ENCODE measurements at regions of chr1 and their contacts with region 1.

Region 1: GRCh38 chr1:147172168-147172992 is at the start of gene PRKAB2:
- DNase-seq: peak; percentile 97
- H3K4me3 ChIP-seq: peak within 1 kb of the TSS; percentile 72 to 94 (median 79)
- H3K27ac ChIP-seq: peak within 1 kb of the TSS; percentile 74
- H3K4me1 ChIP-seq: peaks cover 12% of the 10 kb centered on the region
- H3K27me3 ChIP-seq: no peaks in the 10 kb centered on the region
- CTCF ChIP-seq: peak; percentile 88 to 97
- POLR2A ChIP-seq: peak; percentile 75
- total RNA-seq, gene PRKAB2: 6.2 and 8.1 TPM in 2 replicates

Region 2: DNA sequence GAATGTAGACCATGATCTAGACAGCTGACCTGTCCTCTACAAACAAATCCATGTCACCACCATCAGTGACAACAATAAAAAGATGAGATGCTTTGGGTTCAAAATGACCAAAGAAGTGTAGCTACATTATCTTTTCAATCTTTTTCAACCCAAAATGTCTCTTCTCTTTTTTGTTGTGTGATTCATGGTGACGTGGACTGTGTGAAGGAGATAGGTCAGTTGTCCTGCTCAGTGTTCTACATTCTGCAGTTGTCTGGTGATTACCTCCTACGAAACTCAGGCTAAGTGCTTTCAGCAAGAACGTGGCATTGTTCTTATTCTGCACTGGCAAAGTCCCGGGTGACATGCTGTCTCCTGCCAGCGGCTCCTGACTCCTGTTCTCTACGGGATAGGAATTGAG is 73.2 kb before region 1 on chr1:
- CTCF ChIA-PET with region 1: no interaction called
- POLR2A ChIA-PET with region 1: no interaction called
- dilution Hi-C with region 1: no loop called
- intact Hi-C with region 1: loop called (anchors 2 kb)
- DNase-seq: no peak
- H3K4me3 ChIP-seq: no peak overlapping the region
- H3K27ac ChIP-seq: no peak overlapping the region
- H3K4me1 ChIP-seq: no peaks in the 10 kb centered on the region
- H3K27me3 ChIP-seq: peaks cover 3% of the 10 kb centered on the region in 2 experiments
- CTCF ChIP-seq: no peak
- POLR2A ChIP-seq: no peak

Region 3: GRCh38 chr1:147242439-147243227 is 70.3 kb after region 1 on chr1 and contains the start of gene CHD1L:
- CTCF ChIA-PET with region 1: interaction called, 63 read pairs
- POLR2A ChIA-PET with region 1: interaction called, 4 read pairs
- dilution Hi-C with region 1: no loop called
- intact Hi-C with region 1: loop called (anchors 1 kb)
- DNase-seq: peak; percentile 95
- H3K4me3 ChIP-seq: peak within 1 kb of the TSS; percentile 50 to 97 (median 90)
- H3K27ac ChIP-seq: peak within 1 kb of the TSS; percentile 50
- H3K4me1 ChIP-seq: peaks cover 7% of the 10 kb centered on the region
- H3K27me3 ChIP-seq: peaks cover 0 to 2% of the 10 kb centered on the region in 2 experiments
- CTCF ChIP-seq: peak; percentile 96
- POLR2A ChIP-seq: peak; percentile 66
- total RNA-seq, gene CHD1L: 33.8 and 38.3 TPM in 2 replicates

Region 4: GRCh38 chr1:147504801-147505311 is 332.5 kb after region 1 on chr1:
- CTCF ChIA-PET with region 1: no interaction called
- POLR2A ChIA-PET with region 1: no interaction called
- dilution Hi-C with region 1: no loop called
- intact Hi-C with region 1: no loop called
- DNase-seq: no peak
- H3K4me3 ChIP-seq: no peak overlapping the region
- H3K27ac ChIP-seq: no peak overlapping the region
- H3K4me1 ChIP-seq: no peaks in the 10 kb centered on the region
- H3K27me3 ChIP-seq: peaks cover 3 to 16% of the 10 kb centered on the region in 2 experiments
- CTCF ChIP-seq: no peak
- POLR2A ChIP-seq: no peak

Region 5: GRCh38 chr1:147541672-147542568 is 369.5 kb after region 1 on chr1:
- CTCF ChIA-PET with region 1: no interaction called
- POLR2A ChIA-PET with region 1: no interaction called
- dilution Hi-C with region 1: no loop called
- intact Hi-C with region 1: loop called (anchors 5 kb)
- DNase-seq: no peak
- H3K4me3 ChIP-seq: peak overlapping the region; percentile 46 to 85 (median 64)
- H3K27ac ChIP-seq: peak overlapping the region; percentile 75
- H3K4me1 ChIP-seq: peaks cover 19% of the 10 kb centered on the region
- H3K27me3 ChIP-seq: no peaks in the 10 kb centered on the region
- CTCF ChIP-seq: no peak
- POLR2A ChIP-seq: peak; percentile 48

Measured in endothelial cell of umbilical vein (primary cell).